PC-9 (cell line): ENCODE measurements at regions of chr2 and their contacts with region 1.

Region 1: DNA sequence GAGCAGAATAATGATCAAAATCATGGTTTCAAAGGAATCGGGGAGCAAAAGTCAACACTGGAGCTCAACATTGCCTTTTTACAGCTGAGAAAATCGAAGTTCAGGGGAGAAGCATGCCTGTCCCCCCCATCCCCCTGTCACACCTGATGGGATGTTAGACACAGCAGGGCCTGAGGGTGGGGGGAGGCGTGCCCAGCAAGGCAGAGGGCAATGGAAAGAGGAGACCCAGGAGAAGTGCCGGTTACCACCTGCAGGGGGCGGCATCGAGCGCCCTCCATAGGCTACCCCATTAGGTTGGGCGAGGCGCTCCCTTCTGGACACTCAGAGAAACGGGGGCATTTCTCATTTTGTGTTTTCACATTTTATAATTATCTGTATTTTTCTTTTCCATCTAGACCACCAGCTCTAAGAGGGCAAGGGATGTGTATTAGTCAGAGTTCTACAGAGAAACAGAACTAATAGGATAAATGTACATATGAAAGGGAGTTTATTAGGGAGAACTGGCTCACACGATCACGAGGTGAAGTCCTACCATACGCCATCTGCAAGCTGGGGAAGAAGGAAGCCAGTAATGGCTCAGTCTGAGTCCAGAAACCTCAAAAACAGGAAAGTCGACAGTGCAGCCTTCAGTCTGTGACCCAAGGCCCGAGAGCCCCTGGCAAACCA is 271.3 kb downstream of the LRATD1 start:
- DNase-seq: peak; percentile 39 to 65
- H3K4me3 ChIP-seq: no peak overlapping the region
- H3K27ac ChIP-seq: no peak overlapping the region
- H3K4me1 ChIP-seq: no peaks in the 10 kb centered on the region
- H3K27me3 ChIP-seq: no peaks in the 10 kb centered on the region
- CTCF ChIP-seq: peak; percentile 91

Region 2: DNA sequence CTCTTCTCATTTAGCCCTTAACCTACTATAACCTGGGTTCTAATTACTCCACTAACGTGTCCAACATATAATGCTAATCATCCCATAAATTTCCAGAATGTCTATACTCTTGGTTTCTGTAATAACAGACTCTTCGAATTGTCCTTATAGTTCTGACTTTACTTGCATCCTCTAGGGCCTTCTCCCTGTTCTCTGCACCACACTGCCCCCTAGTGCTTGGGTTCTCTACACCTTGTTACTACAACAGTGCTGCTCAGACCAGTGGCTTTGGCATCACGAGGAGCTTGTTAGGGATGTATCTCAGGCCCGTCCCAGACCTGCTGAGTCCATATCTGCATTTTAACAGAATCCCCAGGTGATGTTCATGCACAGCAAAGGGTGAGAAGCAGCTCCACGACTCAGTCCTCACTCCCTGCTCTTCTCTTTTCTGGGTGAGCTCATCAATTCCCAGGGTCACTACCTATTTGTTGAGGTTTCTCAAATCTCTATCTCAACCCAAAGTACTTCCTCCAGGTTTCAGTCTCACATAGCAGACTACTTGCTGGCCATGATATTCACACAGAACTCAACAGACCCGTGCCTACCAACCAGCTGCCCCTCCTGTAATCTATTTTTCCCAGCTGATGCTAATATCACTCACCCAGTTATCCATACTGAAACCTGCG is 673.4 kb after region 1 on chr2:
- CTCF ChIA-PET with region 1: no interaction called
- POLR2A ChIA-PET with region 1: no interaction called
- intact Hi-C with region 1: loop called (anchors 2 kb)
- DNase-seq: peak; percentile 62 to 72
- H3K4me3 ChIP-seq: no peak overlapping the region
- H3K27ac ChIP-seq: no peak overlapping the region
- H3K4me1 ChIP-seq: no peaks in the 10 kb centered on the region
- H3K27me3 ChIP-seq: no peaks in the 10 kb centered on the region
- CTCF ChIP-seq: peak; percentile 88